ENCODE measurements at regions of chr6 and their contacts with region 1.

Region 1: GRCh38 chr6:154247119-154247861 is 109.3 kb downstream of the IPCEF1 start:
- DNase-seq: peak; percentile 68
- ATAC-seq: peak; percentile 67
- H3K4me3 Mint-ChIP-seq: peak overlapping the region; percentile 91
- H3K27ac Mint-ChIP-seq: peak overlapping the region; percentile 95
- H3K4me1 Mint-ChIP-seq: peaks cover 83% of the 10 kb centered on the region
- H3K27me3 Mint-ChIP-seq: no peaks in the 10 kb centered on the region

Region 2: GRCh38 chr6:154156135-154156896 is 91.0 kb before region 1 on chr6:
- CTCF ChIA-PET with region 1: interaction called, 14 read pairs
- DNase-seq: peak; percentile 81
- ATAC-seq: peak; percentile 98
- H3K4me3 Mint-ChIP-seq: peak overlapping the region; percentile 71
- H3K27ac Mint-ChIP-seq: peak overlapping the region; percentile 83
- H3K4me1 Mint-ChIP-seq: peaks cover 26% of the 10 kb centered on the region
- H3K27me3 Mint-ChIP-seq: no peaks in the 10 kb centered on the region

Region 3: DNA sequence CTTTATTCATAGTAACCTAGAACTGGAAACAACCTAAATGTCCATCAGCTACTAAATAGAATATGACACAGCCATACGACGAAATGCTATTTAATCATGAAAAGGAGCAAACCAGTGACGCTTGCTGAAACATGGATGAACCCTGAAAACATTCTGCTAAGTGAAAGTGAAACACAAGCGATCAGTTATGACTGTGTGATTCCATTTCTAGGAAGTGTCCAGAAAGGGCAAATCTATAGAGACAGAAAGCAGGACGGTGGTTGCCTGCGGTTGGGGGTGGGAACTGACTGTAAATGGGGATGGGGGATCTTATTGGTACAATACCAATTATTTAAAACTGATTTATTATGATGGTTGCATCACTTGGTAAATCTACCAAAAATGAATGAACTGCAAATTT is 17.5 kb before region 1 on chr6:
- CTCF ChIA-PET with region 1: interaction called, 80 read pairs
- DNase-seq: peak; percentile 86
- ATAC-seq: peak; percentile 86
- H3K4me3 Mint-ChIP-seq: peak overlapping the region; percentile 79
- H3K27ac Mint-ChIP-seq: peak overlapping the region; percentile 90
- H3K4me1 Mint-ChIP-seq: peaks cover 58% of the 10 kb centered on the region
- H3K27me3 Mint-ChIP-seq: no peaks in the 10 kb centered on the region

Region 4: GRCh38 chr6:154236646-154237301 is 10.5 kb before region 1 on chr6:
- CTCF ChIA-PET with region 1: interaction called, 80 read pairs
- DNase-seq: no peak
- ATAC-seq: no peak
- H3K4me3 Mint-ChIP-seq: no peak overlapping the region
- H3K27ac Mint-ChIP-seq: no peak overlapping the region
- H3K4me1 Mint-ChIP-seq: peaks cover 39% of the 10 kb centered on the region
- H3K27me3 Mint-ChIP-seq: no peaks in the 10 kb centered on the region